ENCODE measurements at regions of chr1 and their contacts with region 1.

Region 1: GRCh38 chr1:150925816-150926741 is at the start of gene SETDB1:
- DNase-seq: peak; percentile 90
- H3K4me3 Mint-ChIP-seq: peak within 1 kb of the TSS; percentile 97
- H3K27ac Mint-ChIP-seq: peak within 1 kb of the TSS; percentile 95
- H3K4me1 Mint-ChIP-seq: peaks cover 23% of the 10 kb centered on the region
- H3K27me3 Mint-ChIP-seq: no peaks in the 10 kb centered on the region
- total RNA-seq, gene SETDB1: 60.6 and 63.7 TPM in 2 replicates

Region 2: GRCh38 chr1:150486964-150487762 is 438.9 kb before region 1 on chr1 and contains the start of gene TARS2:
- intact Hi-C with region 1: loop called (anchors 5 kb)
- DNase-seq: peak; percentile 94
- H3K4me3 Mint-ChIP-seq: peak within 1 kb of the TSS; percentile 98
- H3K27ac Mint-ChIP-seq: peak within 1 kb of the TSS; percentile 95
- H3K4me1 Mint-ChIP-seq: peaks cover 35% of the 10 kb centered on the region
- H3K27me3 Mint-ChIP-seq: no peaks in the 10 kb centered on the region
- total RNA-seq, gene TARS2: 77.3 and 77.4 TPM in 2 replicates

Region 3: GRCh38 chr1:150629115-150629928 is 296.8 kb before region 1 on chr1 and contains the start of gene ENSA:
- intact Hi-C with region 1: loop called (anchors 1 kb)
- DNase-seq: peak; percentile 94
- H3K4me3 Mint-ChIP-seq: no peak within 1 kb of the TSS
- H3K27ac Mint-ChIP-seq: no peak within 1 kb of the TSS
- H3K4me1 Mint-ChIP-seq: peaks cover 43% of the 10 kb centered on the region
- H3K27me3 Mint-ChIP-seq: peaks cover 1% of the 10 kb centered on the region
- total RNA-seq, gene ENSA: 282 and 285 TPM in 2 replicates

Region 4: GRCh38 chr1:150765296-150765976 is 160.6 kb before region 1 on chr1 and contains the start of gene CTSS:
- intact Hi-C with region 1: loop called (anchors 1 kb)
- DNase-seq: no peak
- H3K4me3 Mint-ChIP-seq: peak within 1 kb of the TSS; percentile 92
- H3K27ac Mint-ChIP-seq: peak within 1 kb of the TSS; percentile 94
- H3K4me1 Mint-ChIP-seq: peaks cover 40% of the 10 kb centered on the region
- H3K27me3 Mint-ChIP-seq: peaks cover 13% of the 10 kb centered on the region
- total RNA-seq, gene CTSS: 31.7 and 34.2 TPM in 2 replicates

Region 5: DNA sequence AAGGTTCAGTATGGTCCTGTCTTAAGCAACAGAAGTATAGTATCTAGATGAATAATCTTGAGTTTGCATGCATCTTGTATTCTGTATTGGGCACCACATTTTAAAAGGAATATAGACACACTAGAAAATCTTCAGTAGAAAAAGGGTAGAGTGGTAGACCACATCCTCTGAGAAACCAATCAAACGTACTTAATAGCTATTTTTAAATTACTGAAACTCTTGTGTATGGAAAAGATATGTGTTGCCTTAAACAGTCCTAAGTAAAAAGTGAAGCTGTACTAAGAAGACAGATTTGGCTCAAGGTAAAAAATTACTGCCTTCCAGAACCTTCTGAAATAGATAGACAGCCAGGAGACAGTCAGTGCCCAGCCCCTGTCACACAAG is 36.1 kb before region 1 on chr1:
- intact Hi-C with region 1: loop called (anchors 5 kb)
- DNase-seq: no peak
- H3K4me3 Mint-ChIP-seq: peak overlapping the region; percentile 48
- H3K27ac Mint-ChIP-seq: peak overlapping the region; percentile 86
- H3K4me1 Mint-ChIP-seq: peaks cover 20% of the 10 kb centered on the region
- H3K27me3 Mint-ChIP-seq: peaks cover 2% of the 10 kb centered on the region

Region 6: DNA sequence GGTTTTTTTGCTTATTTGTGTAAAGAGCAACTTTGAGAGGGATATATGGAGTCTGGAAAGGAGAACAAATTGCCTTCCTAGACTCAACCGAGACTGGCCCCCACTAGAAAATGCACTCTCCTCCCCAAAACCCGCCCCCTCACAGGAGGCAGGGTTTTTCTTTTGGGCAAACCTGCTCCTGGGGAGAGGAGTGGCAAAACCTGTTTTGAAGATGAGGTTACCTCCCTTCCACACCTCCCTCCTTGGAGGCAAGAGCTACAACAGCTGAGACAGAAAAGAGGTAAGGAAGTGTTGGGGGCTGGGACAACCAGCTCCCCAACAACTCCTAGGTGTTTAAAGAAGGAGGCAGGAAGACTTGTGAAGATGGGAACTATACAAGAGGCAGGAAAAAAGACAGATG is 110.3 kb after region 1 on chr1 and contains the start of gene BNIPL:
- intact Hi-C with region 1: no loop called
- DNase-seq: no peak
- H3K4me3 Mint-ChIP-seq: no peak within 1 kb of the TSS
- H3K27ac Mint-ChIP-seq: no peak within 1 kb of the TSS
- H3K4me1 Mint-ChIP-seq: no peaks in the 10 kb centered on the region
- H3K27me3 Mint-ChIP-seq: no peaks in the 10 kb centered on the region
- total RNA-seq, gene BNIPL: 0.70 and 0.73 TPM in 2 replicates

Region 7: GRCh38 chr1:151059078-151059907 is 133.2 kb after region 1 on chr1 and contains the start of gene CDC42SE1:
- intact Hi-C with region 1: loop called (anchors 5 kb)
- DNase-seq: peak; percentile 81
- H3K4me3 Mint-ChIP-seq: peak within 1 kb of the TSS; percentile 95
- H3K27ac Mint-ChIP-seq: peak within 1 kb of the TSS; percentile 97
- H3K4me1 Mint-ChIP-seq: peaks cover 65% of the 10 kb centered on the region
- H3K27me3 Mint-ChIP-seq: no peaks in the 10 kb centered on the region
- total RNA-seq, gene CDC42SE1: 216 and 219 TPM in 2 replicates

Measured in activated T-helper 1 cell treated with anti-CD3 and anti-CD28 coated beads, Interleukin-12 subunit alpha, Interleukin-12 subunit beta, Interleukin-2, Interleukin-4 antibody, amounts not matched to agents 30 ng/mL and 10 ng/mL and 1 ng/mL, durations not matched to agents 14 hours and 24 hours and 36 hours (primary cell).